ENCODE measurements at regions of chr2 and their contacts with region 1.

Region 1: GRCh38 chr2:175154661-175155082 is 13.3 kb downstream of the ATF2 start:
- DNase-seq: no peak
- H3K4me3 Mint-ChIP-seq: no peak overlapping the region
- H3K27ac Mint-ChIP-seq: peak overlapping the region; percentile 75
- H3K4me1 Mint-ChIP-seq: peaks cover 46% of the 10 kb centered on the region
- H3K27me3 Mint-ChIP-seq: no peaks in the 10 kb centered on the region

Region 2: GRCh38 chr2:175136334-175137215 is 18.1 kb before region 1 on chr2:
- CTCF ChIA-PET with region 1: no interaction called
- POLR2A ChIA-PET with region 1: no interaction called
- intact Hi-C with region 1: loop called (anchors 1 kb)
- DNase-seq: no peak
- H3K4me3 Mint-ChIP-seq: no peak overlapping the region
- H3K27ac Mint-ChIP-seq: no peak overlapping the region
- H3K4me1 Mint-ChIP-seq: peaks cover 24% of the 10 kb centered on the region
- H3K27me3 Mint-ChIP-seq: no peaks in the 10 kb centered on the region

Region 3: DNA sequence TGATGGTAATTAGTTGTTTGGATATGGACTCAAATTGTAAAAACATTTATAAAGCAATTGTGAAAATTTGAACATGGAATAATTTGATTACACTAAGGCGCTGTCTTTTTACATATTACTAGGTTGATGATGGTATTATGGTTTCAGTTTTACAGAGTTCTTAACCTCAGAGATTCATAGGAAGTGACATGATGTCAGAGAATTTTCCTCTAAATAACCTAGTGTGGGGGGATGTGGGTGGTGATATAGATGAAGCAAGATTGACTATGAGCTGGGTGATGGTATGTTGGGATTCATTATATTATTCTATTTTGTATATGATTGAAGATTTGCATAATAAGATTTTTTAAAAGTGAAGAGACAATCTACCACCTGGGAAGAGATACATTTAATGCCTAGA is 72.7 kb after region 1 on chr2:
- CTCF ChIA-PET with region 1: no interaction called
- POLR2A ChIA-PET with region 1: no interaction called
- intact Hi-C with region 1: loop called (anchors 5 kb)
- DNase-seq: no peak
- H3K4me3 Mint-ChIP-seq: no peak overlapping the region
- H3K27ac Mint-ChIP-seq: peak overlapping the region; percentile 46
- H3K4me1 Mint-ChIP-seq: peaks cover 18% of the 10 kb centered on the region
- H3K27me3 Mint-ChIP-seq: peaks cover 21% of the 10 kb centered on the region

Region 4: DNA sequence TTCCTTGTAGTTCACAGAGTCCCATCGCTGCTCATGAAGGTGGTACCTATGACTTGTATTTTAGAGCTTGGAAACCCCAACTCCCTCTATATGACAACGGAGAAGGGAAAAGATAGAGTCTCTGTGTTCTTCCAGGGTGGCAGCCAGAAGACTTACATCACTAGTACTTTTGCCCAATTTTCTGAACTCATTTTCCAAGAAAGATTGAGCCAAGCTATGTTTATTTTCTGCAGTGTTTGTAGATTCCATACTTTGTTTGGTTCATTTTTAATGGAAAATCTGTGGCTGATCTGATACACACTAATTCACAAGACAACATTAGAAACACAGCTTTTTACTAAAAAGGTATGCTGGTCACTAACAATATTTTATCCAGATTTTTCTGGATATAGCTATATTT is 87.0 kb after region 1 on chr2:
- CTCF ChIA-PET with region 1: no interaction called
- POLR2A ChIA-PET with region 1: no interaction called
- intact Hi-C with region 1: no loop called
- DNase-seq: no peak
- H3K4me3 Mint-ChIP-seq: no peak overlapping the region
- H3K27ac Mint-ChIP-seq: no peak overlapping the region
- H3K4me1 Mint-ChIP-seq: peaks cover 2% of the 10 kb centered on the region
- H3K27me3 Mint-ChIP-seq: peaks cover 23% of the 10 kb centered on the region

Measured in activated CD4-positive, alpha-beta memory T cell treated with anti-CD3 and anti-CD28 coated beads for 36 hours (primary cell).